ENCODE measurements at regions of chr6 and their contacts with region 1.

Region 1: GRCh38 chr6:10163200-10163962 is 251.5 kb downstream of the TFAP2A start:
- DNase-seq: peak; percentile 89
- H3K4me3 Mint-ChIP-seq: peak overlapping the region; percentile 59
- H3K27ac Mint-ChIP-seq: peak overlapping the region; percentile 76
- H3K4me1 Mint-ChIP-seq: peaks cover 18% of the 10 kb centered on the region
- H3K27me3 Mint-ChIP-seq: no peaks in the 10 kb centered on the region
- CTCF ChIP-seq: no peak

Region 2: DNA sequence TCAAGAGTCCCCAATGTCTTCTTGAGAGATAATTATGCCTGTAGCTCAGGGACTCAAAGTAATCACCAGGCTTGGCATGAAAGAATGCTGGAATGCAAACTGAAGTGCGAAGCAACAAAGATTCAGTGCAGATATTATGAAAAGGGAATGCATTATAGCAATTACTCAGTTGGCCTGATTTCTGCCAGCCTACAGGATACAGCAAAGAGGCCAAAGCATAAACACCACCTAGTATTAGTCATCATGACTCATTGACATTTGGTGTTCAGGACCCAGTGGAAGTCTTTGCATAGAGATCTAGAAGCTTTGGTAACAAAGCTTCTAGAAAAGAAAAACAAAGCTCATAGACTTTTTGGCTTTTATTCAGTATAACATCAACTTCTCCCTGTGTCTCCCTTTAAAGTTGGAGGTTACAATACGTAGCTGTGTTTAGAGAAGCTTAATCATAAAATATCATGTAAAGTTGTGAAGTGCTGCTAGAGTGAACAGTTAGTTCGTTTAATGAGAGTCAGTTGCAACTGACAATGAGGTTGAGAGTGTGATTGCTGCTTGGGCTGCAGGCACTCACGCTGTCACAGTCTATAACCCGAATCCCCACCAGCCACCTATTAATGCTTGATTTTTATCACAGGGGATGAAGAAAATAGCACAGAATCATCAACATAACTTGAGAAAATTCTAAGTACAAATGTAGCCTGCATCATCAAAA is 681.2 kb before region 1 on chr6:
- CTCF ChIA-PET with region 1: no interaction called
- POLR2A ChIA-PET with region 1: no interaction called
- intact Hi-C with region 1: no loop called
- DNase-seq: peak; percentile 94
- H3K4me3 Mint-ChIP-seq: peak overlapping the region; percentile 32
- H3K27ac Mint-ChIP-seq: peak overlapping the region; percentile 79
- H3K4me1 Mint-ChIP-seq: peaks cover 36% of the 10 kb centered on the region
- H3K27me3 Mint-ChIP-seq: no peaks in the 10 kb centered on the region
- CTCF ChIP-seq: no peak

Region 3: DNA sequence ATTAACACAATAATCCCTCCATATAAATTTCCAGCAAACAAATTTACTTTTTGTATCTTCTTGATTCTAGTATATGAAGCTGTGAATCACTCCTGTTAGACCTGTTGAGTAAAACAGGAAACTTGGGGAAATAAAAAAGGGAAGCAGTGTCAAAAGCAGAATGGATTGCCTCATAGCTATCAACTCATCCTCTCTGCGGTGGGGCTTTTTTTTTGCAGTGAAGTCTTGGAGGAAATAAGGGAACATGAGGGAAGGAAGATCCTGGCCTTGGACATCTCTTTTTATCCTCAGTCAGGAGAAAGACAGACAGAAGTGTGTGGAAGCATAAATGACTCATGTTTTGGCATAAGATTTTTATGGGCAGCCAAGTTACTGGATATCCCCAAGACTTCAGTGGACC is 81.0 kb before region 1 on chr6:
- CTCF ChIA-PET with region 1: interaction called, 4 read pairs
- POLR2A ChIA-PET with region 1: interaction called, 15 read pairs
- intact Hi-C with region 1: no loop called
- DNase-seq: peak; percentile 71
- H3K4me3 Mint-ChIP-seq: no peak overlapping the region
- H3K27ac Mint-ChIP-seq: peak overlapping the region; percentile 33
- H3K4me1 Mint-ChIP-seq: peaks cover 49% of the 10 kb centered on the region
- H3K27me3 Mint-ChIP-seq: no peaks in the 10 kb centered on the region
- CTCF ChIP-seq: no peak

Region 4: GRCh38 chr6:10093282-10093681 is 70.1 kb before region 1 on chr6:
- CTCF ChIA-PET with region 1: no interaction called
- POLR2A ChIA-PET with region 1: no interaction called
- intact Hi-C with region 1: no loop called
- DNase-seq: no peak
- H3K4me3 Mint-ChIP-seq: no peak overlapping the region
- H3K27ac Mint-ChIP-seq: no peak overlapping the region
- H3K4me1 Mint-ChIP-seq: no peaks in the 10 kb centered on the region
- H3K27me3 Mint-ChIP-seq: no peaks in the 10 kb centered on the region
- CTCF ChIP-seq: no peak

Region 5: GRCh38 chr6:10146723-10147451 is 16.5 kb before region 1 on chr6:
- CTCF ChIA-PET with region 1: no interaction called
- POLR2A ChIA-PET with region 1: interaction called, 22 read pairs
- intact Hi-C with region 1: no loop called
- DNase-seq: peak; percentile 59
- H3K4me3 Mint-ChIP-seq: peak overlapping the region; percentile 51
- H3K27ac Mint-ChIP-seq: peak overlapping the region; percentile 14
- H3K4me1 Mint-ChIP-seq: peaks cover 30% of the 10 kb centered on the region
- H3K27me3 Mint-ChIP-seq: no peaks in the 10 kb centered on the region
- CTCF ChIP-seq: no peak

Region 6: GRCh38 chr6:10310826-10311225 is 147.4 kb after region 1 on chr6:
- CTCF ChIA-PET with region 1: no interaction called
- POLR2A ChIA-PET with region 1: interaction called, 15 read pairs
- intact Hi-C with region 1: no loop called
- DNase-seq: peak; percentile 56
- H3K4me3 Mint-ChIP-seq: peak overlapping the region; percentile 24
- H3K27ac Mint-ChIP-seq: peak overlapping the region; percentile 55
- H3K4me1 Mint-ChIP-seq: peaks cover 31% of the 10 kb centered on the region
- H3K27me3 Mint-ChIP-seq: no peaks in the 10 kb centered on the region
- CTCF ChIP-seq: no peak

Region 7: DNA sequence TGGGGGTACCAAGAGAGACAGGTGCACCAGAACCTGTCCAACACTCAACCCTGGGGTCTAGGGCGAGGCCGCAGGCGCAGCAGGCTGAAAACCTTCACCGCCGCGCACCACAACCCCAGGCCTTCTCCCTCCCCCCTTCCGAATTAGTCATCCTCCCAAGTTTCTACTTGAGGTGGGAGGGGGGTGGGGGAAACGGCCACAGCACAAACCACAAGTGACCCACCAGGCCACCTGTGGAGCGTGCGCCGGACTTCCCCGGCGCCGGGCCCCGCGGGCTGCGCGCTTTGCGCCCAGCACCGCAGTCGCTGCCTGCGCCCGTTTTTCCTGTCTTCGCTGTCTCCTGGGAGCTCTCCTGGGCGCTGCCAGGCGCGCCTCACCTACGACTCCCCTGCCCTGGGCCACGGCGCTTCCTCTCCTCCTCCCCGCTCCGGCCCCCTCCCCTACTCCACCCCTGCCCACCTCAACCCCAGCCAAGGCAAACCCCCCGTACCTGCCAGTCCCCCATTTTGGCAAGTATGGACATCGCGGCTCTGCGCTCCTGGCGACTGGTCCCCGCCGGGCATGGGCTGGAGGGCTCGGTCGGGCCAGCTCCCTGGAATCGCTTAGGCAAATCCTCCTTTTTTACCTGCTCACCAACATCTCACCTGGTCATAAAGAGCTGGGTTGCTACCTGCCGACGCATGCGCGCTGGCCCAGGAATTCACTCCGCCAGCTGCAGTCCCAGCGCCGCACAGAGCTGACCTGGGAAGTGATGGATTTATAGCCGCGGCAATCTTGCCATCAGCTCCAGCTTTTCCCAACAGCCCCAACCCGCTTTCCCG is 255.8 kb after region 1 on chr6:
- CTCF ChIA-PET with region 1: no interaction called
- POLR2A ChIA-PET with region 1: interaction called, 27 read pairs
- intact Hi-C with region 1: no loop called
- DNase-seq: peak; percentile 96
- H3K4me3 Mint-ChIP-seq: peak overlapping the region; percentile 94
- H3K27ac Mint-ChIP-seq: peak overlapping the region; percentile 99
- H3K4me1 Mint-ChIP-seq: peaks cover 24% of the 10 kb centered on the region
- H3K27me3 Mint-ChIP-seq: no peaks in the 10 kb centered on the region
- CTCF ChIP-seq: no peak

Measured in MCF 10A (cell line).